Ovary (tissue), 10 donors: ENCODE measurements at regions of chr9 and their contacts with region 1.

Region 1: DNA sequence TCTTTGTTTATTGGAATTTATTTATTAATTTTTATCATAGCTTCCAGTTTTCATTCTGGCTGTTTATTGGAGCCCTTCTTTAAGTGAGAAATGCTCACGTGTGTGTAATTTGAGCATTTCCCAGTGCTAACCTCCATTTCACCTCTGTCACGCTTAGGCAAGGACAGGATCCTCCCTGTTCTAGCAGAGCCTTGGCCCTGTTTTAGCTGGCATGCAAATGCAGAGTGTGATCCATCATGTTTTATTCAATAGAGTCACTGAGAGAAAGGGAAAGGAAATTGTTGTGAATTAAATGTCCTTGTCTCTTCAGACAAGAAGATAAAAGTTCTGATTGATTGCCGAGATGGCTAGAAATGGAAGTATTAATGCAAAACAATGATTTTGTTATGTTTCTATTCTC is 137.3 kb upstream of the ACO1 start:
- DNase-seq: no peak
- H3K4me3 ChIP-seq: no peak overlapping the region
- H3K27ac ChIP-seq: no peak overlapping the region
- H3K4me1 ChIP-seq: no peaks in the 10 kb centered on the region
- H3K27me3 ChIP-seq: no peaks in the 10 kb centered on the region
- CTCF ChIP-seq: no peak
- EP300 ChIP-seq: no peak
- POLR2A ChIP-seq: no peak

Region 2: DNA sequence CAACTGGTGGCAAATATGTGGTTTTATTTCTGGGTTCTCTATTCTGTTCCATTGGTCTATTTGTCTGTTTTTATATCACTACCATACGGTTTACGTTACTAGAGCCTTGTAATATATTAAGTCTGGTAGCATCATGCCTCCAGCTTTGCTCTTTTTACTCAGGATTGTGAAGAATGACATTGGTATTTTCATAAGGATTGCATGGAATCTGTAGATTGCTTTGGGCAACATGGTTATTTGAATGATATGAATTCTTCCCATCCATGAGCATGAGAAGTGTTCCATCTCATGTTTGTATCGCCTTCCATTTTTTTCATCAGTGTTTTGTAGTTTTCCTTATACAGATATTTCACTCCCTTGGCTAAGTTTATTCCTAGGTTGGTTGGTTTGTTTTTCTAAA is 50.4 kb before region 1 on chr9:
- intact Hi-C with region 1: loop called in 1 of 4 experiments (anchors 10 kb)
- DNase-seq: no peak
- H3K4me3 ChIP-seq: no peak overlapping the region
- H3K27ac ChIP-seq: no peak overlapping the region
- H3K4me1 ChIP-seq: no peaks in the 10 kb centered on the region
- H3K27me3 ChIP-seq: no peaks in the 10 kb centered on the region
- CTCF ChIP-seq: no peak
- EP300 ChIP-seq: no peak
- POLR2A ChIP-seq: no peak

Region 3: DNA sequence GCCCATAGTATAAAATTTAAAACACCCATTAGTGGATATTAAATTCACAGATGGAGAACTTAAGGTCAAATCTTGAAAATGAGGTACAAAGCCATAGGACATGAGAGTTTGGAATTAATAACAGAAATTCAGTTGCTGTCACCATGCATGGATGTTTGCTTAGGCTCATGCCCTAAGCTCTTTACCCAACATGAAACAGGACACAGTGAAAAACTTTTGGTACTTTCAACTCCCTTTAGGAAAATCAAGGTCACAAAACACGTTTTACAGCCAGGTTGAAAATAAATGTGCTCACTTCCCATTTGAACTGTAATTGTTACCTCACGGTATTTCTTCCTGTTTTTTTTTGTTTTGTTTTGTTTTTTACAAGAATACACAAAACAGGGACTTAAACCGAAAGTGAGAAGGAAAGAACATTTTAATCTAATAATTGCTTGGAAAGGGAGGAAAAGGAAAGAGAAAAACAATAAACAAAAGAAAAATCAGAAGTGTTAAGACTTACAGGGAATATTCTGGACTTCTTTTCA is 311.3 kb after region 1 on chr9:
- intact Hi-C with region 1: no loop called
- DNase-seq: no peak
- H3K4me3 ChIP-seq: no peak overlapping the region
- H3K27ac ChIP-seq: no peak overlapping the region
- H3K4me1 ChIP-seq: no peaks in the 10 kb centered on the region
- H3K27me3 ChIP-seq: no peaks in the 10 kb centered on the region
- CTCF ChIP-seq: no peak
- EP300 ChIP-seq: no peak
- POLR2A ChIP-seq: no peak